Caco-2 (cell line): ENCODE measurements at regions of chr12 and their contacts with region 1.

Region 1: DNA sequence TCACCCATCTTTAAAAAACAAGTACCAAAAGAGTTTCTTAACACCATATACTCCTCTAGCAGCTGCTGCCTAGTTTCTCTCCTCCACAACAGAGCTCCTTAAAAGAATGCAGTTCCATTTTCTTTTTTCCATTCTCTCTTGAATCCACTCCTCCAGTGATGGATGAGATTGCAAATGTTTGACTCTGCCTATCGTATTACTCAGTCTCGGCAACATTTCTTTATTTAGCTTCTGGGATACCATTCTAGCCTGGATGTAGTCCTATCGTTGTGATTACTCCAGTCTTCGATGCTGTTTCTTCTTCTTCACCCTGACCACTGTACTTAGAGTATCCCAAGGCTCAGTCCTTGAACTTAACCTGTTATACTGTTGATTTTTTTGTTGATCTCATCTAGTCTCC is 30.8 kb downstream of the CAND1 start:
- DNase-seq: no peak
- H3K4me3 ChIP-seq: no peak overlapping the region
- H3K4me3 Mint-ChIP-seq: no peak overlapping the region
- H3K27ac Mint-ChIP-seq: peak overlapping the region; percentile 51
- H3K4me1 ChIP-seq: no peaks in the 10 kb centered on the region
- H3K4me1 Mint-ChIP-seq: no peaks in the 10 kb centered on the region
- H3K27me3 ChIP-seq: no peaks in the 10 kb centered on the region
- H3K27me3 Mint-ChIP-seq: no peaks in the 10 kb centered on the region
- CTCF ChIP-seq: no peak

Region 2: GRCh38 chr12:67268896-67269631 is 30.9 kb before region 1 on chr12 and contains the start of gene CAND1:
- CTCF ChIA-PET with region 1: no interaction called
- POLR2A ChIA-PET with region 1: interaction called, 4 read pairs
- intact Hi-C with region 1: loop called (anchors 1 kb)
- DNase-seq: peak; percentile 97 to 98
- H3K4me3 ChIP-seq: peak within 1 kb of the TSS; percentile 78
- H3K4me3 Mint-ChIP-seq: peak within 1 kb of the TSS; percentile 83
- H3K27ac Mint-ChIP-seq: peak within 1 kb of the TSS; percentile 96
- H3K4me1 ChIP-seq: no peaks in the 10 kb centered on the region
- H3K4me1 Mint-ChIP-seq: peaks cover 6% of the 10 kb centered on the region
- H3K27me3 ChIP-seq: no peaks in the 10 kb centered on the region
- H3K27me3 Mint-ChIP-seq: no peaks in the 10 kb centered on the region
- CTCF ChIP-seq: peak in 1 of 2 experiments; percentile 11
- total RNA-seq, gene CAND1: 148 and 153 TPM in 2 replicates